Endothelial cell of umbilical vein (primary cell): ENCODE measurements at regions of chr3 and their contacts with region 1.

Region 1: GRCh38 chr3:123884203-123884831 is at the start of gene MYLK:
- DNase-seq: peak; percentile 71
- H3K4me3 ChIP-seq: peak within 1 kb of the TSS; percentile 7 to 30 (median 20)
- H3K27ac ChIP-seq: no peak within 1 kb of the TSS
- H3K4me1 ChIP-seq: peaks cover 3% of the 10 kb centered on the region
- H3K27me3 ChIP-seq: peaks cover 8 to 14% of the 10 kb centered on the region in 2 experiments
- CTCF ChIP-seq: no peak
- POLR2A ChIP-seq: no peak
- total RNA-seq, gene MYLK: 17.2 and 22.2 TPM in 2 replicates

Region 2: GRCh38 chr3:123421353-123422174 is 462.8 kb before region 1 on chr3:
- CTCF ChIA-PET with region 1: no interaction called
- POLR2A ChIA-PET with region 1: no interaction called
- dilution Hi-C with region 1: no loop called
- intact Hi-C with region 1: no loop called
- DNase-seq: no peak
- H3K4me3 ChIP-seq: no peak overlapping the region
- H3K27ac ChIP-seq: no peak overlapping the region
- H3K4me1 ChIP-seq: no peaks in the 10 kb centered on the region
- H3K27me3 ChIP-seq: peaks cover 0 to 4% of the 10 kb centered on the region in 2 experiments
- CTCF ChIP-seq: no peak
- POLR2A ChIP-seq: no peak

Region 3: DNA sequence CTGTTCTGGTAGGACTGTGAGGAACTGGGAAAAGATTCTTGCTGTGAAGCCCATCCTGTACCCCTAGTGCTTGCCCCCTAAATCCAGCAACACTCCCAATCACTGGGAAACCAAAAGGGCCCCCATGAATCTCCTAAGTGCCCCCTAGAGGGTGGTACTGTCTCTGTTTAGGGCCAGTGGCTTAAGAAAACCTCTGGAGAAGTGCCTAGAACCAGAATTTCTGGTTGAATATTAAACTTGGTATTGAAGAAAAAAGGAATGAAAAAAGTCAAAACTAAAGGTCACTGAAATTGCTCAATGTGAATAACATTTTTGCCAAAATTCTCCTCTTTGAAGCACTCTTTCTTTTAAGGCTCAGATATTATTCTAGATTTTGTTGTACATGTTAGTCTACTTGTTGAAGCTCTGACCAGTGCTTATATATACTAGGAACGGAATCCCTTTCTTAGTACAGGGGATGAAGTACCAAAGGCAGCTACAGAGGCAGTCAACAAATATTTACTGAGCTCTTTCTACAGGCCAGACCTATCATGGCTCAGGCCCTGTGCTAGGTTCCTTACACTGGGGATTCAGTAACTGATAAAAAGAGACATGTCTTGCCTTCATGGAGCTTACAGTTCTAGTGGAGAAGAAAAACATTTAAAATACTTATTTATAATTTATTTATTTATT is 139.0 kb before region 1 on chr3:
- CTCF ChIA-PET with region 1: interaction called, 8 read pairs
- POLR2A ChIA-PET with region 1: no interaction called
- dilution Hi-C with region 1: no loop called
- intact Hi-C with region 1: loop called (anchors 1 kb)
- DNase-seq: peak; percentile 35
- H3K4me3 ChIP-seq: no peak overlapping the region
- H3K27ac ChIP-seq: no peak overlapping the region
- H3K4me1 ChIP-seq: peaks cover 7% of the 10 kb centered on the region
- H3K27me3 ChIP-seq: no peaks in the 10 kb centered on the region
- CTCF ChIP-seq: peak; percentile 55 to 62
- POLR2A ChIP-seq: no peak

Region 4: GRCh38 chr3:123750659-123751420 is 133.5 kb before region 1 on chr3:
- CTCF ChIA-PET with region 1: interaction called, 8 read pairs
- POLR2A ChIA-PET with region 1: no interaction called
- dilution Hi-C with region 1: no loop called
- intact Hi-C with region 1: loop called (anchors 1 kb)
- DNase-seq: peak; percentile 64
- H3K4me3 ChIP-seq: no peak overlapping the region
- H3K27ac ChIP-seq: peak overlapping the region; percentile 46
- H3K4me1 ChIP-seq: peaks cover 15% of the 10 kb centered on the region
- H3K27me3 ChIP-seq: no peaks in the 10 kb centered on the region
- CTCF ChIP-seq: no peak
- POLR2A ChIP-seq: no peak

Region 5: GRCh38 chr3:123807820-123808219 is 76.5 kb before region 1 on chr3:
- CTCF ChIA-PET with region 1: interaction called, 4 read pairs
- POLR2A ChIA-PET with region 1: no interaction called
- dilution Hi-C with region 1: no loop called
- intact Hi-C with region 1: loop called (anchors 5 kb)
- DNase-seq: peak; percentile 25
- H3K4me3 ChIP-seq: no peak overlapping the region
- H3K27ac ChIP-seq: no peak overlapping the region
- H3K4me1 ChIP-seq: peaks cover 24% of the 10 kb centered on the region
- H3K27me3 ChIP-seq: peaks cover 0 to 3% of the 10 kb centered on the region in 2 experiments
- CTCF ChIP-seq: no peak
- POLR2A ChIP-seq: no peak

Region 6: GRCh38 chr3:123960781-123961507 is 76.6 kb after region 1 on chr3 and contains the start of gene CCDC14:
- CTCF ChIA-PET with region 1: no interaction called
- POLR2A ChIA-PET with region 1: no interaction called
- dilution Hi-C with region 1: no loop called
- intact Hi-C with region 1: loop called (anchors 5 kb)
- DNase-seq: peak; percentile 95
- H3K4me3 ChIP-seq: peak within 1 kb of the TSS; percentile 58 to 97 (median 94)
- H3K27ac ChIP-seq: peak within 1 kb of the TSS; percentile 81
- H3K4me1 ChIP-seq: peaks cover 28% of the 10 kb centered on the region
- H3K27me3 ChIP-seq: peaks cover 5 to 7% of the 10 kb centered on the region in 2 experiments
- CTCF ChIP-seq: no peak
- POLR2A ChIP-seq: peak; percentile 67
- total RNA-seq, gene CCDC14: 46.3 and 47.5 TPM in 2 replicates